Activated CD4-positive, alpha-beta memory T cell treated with anti-CD3 and anti-CD28 coated beads for 36 hours (primary cell): ENCODE measurements at regions of chr5 and their contacts with region 1.

Region 1: GRCh38 chr5:154647114-154647760 is 107.9 kb upstream of the LARP1 start:
- DNase-seq: peak; percentile 15
- H3K4me3 Mint-ChIP-seq: peak overlapping the region; percentile 44
- H3K27ac Mint-ChIP-seq: no peak overlapping the region
- H3K4me1 Mint-ChIP-seq: peaks cover 12% of the 10 kb centered on the region
- H3K27me3 Mint-ChIP-seq: peaks cover 19% of the 10 kb centered on the region

Region 2: GRCh38 chr5:154298065-154298464 is 349.2 kb before region 1 on chr5:
- CTCF ChIA-PET with region 1: no interaction called
- POLR2A ChIA-PET with region 1: no interaction called
- intact Hi-C with region 1: no loop called
- DNase-seq: no peak
- H3K4me3 Mint-ChIP-seq: no peak overlapping the region
- H3K27ac Mint-ChIP-seq: no peak overlapping the region
- H3K4me1 Mint-ChIP-seq: no peaks in the 10 kb centered on the region
- H3K27me3 Mint-ChIP-seq: no peaks in the 10 kb centered on the region

Region 3: GRCh38 chr5:154743812-154744211 is 96.6 kb after region 1 on chr5:
- CTCF ChIA-PET with region 1: no interaction called
- POLR2A ChIA-PET with region 1: no interaction called
- intact Hi-C with region 1: no loop called
- DNase-seq: no peak
- H3K4me3 Mint-ChIP-seq: no peak overlapping the region
- H3K27ac Mint-ChIP-seq: no peak overlapping the region
- H3K4me1 Mint-ChIP-seq: no peaks in the 10 kb centered on the region
- H3K27me3 Mint-ChIP-seq: no peaks in the 10 kb centered on the region

Region 4: GRCh38 chr5:154811653-154812365 is 164.6 kb after region 1 on chr5:
- CTCF ChIA-PET with region 1: interaction called, 35 read pairs
- POLR2A ChIA-PET with region 1: no interaction called
- intact Hi-C with region 1: loop called (anchors 1 kb)
- DNase-seq: peak; percentile 75
- H3K4me3 Mint-ChIP-seq: no peak overlapping the region
- H3K27ac Mint-ChIP-seq: no peak overlapping the region
- H3K4me1 Mint-ChIP-seq: peaks cover 15% of the 10 kb centered on the region
- H3K27me3 Mint-ChIP-seq: no peaks in the 10 kb centered on the region

Region 5: GRCh38 chr5:155004138-155004744 is 357.0 kb after region 1 on chr5:
- CTCF ChIA-PET with region 1: interaction called, 4 read pairs
- POLR2A ChIA-PET with region 1: no interaction called
- intact Hi-C with region 1: loop called (anchors 2 kb)
- DNase-seq: peak; percentile 42
- H3K4me3 Mint-ChIP-seq: no peak overlapping the region
- H3K27ac Mint-ChIP-seq: no peak overlapping the region
- H3K4me1 Mint-ChIP-seq: no peaks in the 10 kb centered on the region
- H3K27me3 Mint-ChIP-seq: peaks cover 12% of the 10 kb centered on the region